Colonic mucosa (tissue), 4 donors: ENCODE measurements at regions of chr1 and their contacts with region 1.

Region 1: DNA sequence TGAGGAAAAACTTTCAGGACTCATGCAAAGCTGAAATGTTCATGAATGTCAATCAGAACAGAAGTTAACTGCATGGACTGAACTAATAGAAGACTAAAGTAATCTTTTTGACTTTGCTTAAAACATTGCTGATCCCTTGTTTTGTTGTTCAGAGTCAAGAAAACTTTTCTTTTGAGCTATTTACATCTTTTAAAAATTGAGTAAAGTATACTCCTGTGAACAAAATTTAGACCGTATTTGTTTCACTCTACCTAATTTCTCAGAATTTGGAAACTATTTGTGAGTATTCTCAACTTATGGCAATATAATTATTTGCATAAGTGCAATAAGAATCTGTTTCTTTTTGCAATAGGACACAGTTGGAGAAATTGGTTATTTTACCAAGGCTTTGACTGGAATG is 41.1 kb downstream of the INPP5B start:
- DNase-seq: no peak
- H3K4me3 ChIP-seq: no peak overlapping the region
- H3K27ac ChIP-seq: no peak overlapping the region
- H3K4me1 ChIP-seq: no peaks in the 10 kb centered on the region
- H3K27me3 ChIP-seq: no peaks in the 10 kb centered on the region
- CTCF ChIP-seq: no peak

Region 2: GRCh38 chr1:37965301-37965700 is 59.6 kb after region 1 on chr1:
- intact Hi-C with region 1: loop called (anchors 5 kb)
- DNase-seq: no peak
- H3K4me3 ChIP-seq: no peak overlapping the region
- H3K27ac ChIP-seq: no peak overlapping the region
- H3K4me1 ChIP-seq: no peaks in the 10 kb centered on the region
- H3K27me3 ChIP-seq: no peaks in the 10 kb centered on the region
- CTCF ChIP-seq: no peak